Naive thymus-derived CD4-positive, alpha-beta T cell (primary cell): ENCODE measurements at regions of chr10 and their contacts with region 1.

Region 1: GRCh38 chr10:43574001-43574892 is at the start of gene ZNF239:
- DNase-seq: peak; percentile 62 to 82 (median 78)
- ATAC-seq: peak; percentile 91
- H3K4me3 ChIP-seq: peak within 1 kb of the TSS; percentile 72
- H3K4me3 Mint-ChIP-seq: peak within 1 kb of the TSS; percentile 72 to 93 (median 90)
- H3K27ac ChIP-seq: peak within 1 kb of the TSS; percentile 66
- H3K27ac Mint-ChIP-seq: peak within 1 kb of the TSS; percentile 29 to 96 (median 93)
- H3K4me1 ChIP-seq: peaks cover 14 to 19% of the 10 kb centered on the region in 2 donors
- H3K4me1 Mint-ChIP-seq: peaks cover 28 to 64% (median 61%) of the 10 kb centered on the region in 7 donors
- H3K27me3 ChIP-seq: no peaks in the 10 kb centered on the region
- H3K27me3 Mint-ChIP-seq: peaks cover 0 to 3% (median 0%) of the 10 kb centered on the region in 5 donors
- total RNA-seq, gene ZNF239: 1.7 to 8.5 (median 2.3) TPM

Region 2: DNA sequence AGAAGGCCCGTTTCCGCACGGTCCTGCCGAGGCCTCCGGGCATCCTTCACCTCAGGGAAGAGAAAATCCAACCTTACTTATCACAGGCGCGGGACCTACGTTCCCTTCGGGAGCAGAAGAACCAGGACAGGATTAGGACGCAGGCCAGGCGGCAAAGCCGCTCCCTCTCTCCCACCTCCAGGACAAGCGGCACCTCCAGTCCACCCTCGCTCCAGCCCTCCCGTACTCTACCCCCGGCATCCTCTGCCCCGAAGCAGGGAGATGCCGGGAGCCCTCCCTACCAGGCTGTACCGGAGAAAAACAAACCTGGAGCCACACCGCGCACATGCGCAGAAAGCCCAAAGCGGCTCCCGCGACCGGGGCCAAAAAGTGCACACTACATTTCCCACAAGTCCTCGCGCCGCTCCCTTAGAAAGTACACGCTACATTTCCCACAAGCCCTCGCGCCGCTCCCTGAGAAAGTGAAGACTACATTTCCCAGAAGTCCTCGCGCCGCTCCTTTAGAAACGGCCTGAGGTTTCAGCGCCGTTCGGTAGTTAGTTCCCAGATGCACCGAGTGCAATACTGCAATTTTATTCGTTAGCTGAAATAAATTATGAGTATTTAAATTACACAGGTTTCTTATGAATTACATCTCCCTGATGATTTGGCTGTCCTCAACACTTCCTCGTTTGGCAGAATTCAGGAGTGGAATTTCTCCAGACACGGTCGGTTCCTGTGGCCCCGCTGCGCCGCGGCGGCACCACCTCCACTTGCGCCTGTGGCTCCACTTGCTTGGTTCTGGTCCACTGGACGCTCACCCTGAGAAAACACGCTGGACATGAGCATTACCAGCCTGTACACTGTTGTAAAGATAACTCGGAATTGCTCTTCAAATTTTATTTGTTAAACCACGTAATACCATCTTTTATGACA is 1021.5 kb before region 1 on chr10:
- CTCF ChIA-PET with region 1: no interaction called
- POLR2A ChIA-PET with region 1: no interaction called
- intact Hi-C with region 1: loop called in 1 of 2 experiments (anchors 1 kb)
- DNase-seq: peak; percentile 83 to 92 (median 91)
- ATAC-seq: peak; percentile 98
- H3K4me3 ChIP-seq: peak overlapping the region; percentile 95
- H3K4me3 Mint-ChIP-seq: peak overlapping the region; percentile 96 to 100 (median 98)
- H3K27ac ChIP-seq: peak overlapping the region; percentile 87
- H3K27ac Mint-ChIP-seq: peak overlapping the region; percentile 86 to 98 (median 96)
- H3K4me1 ChIP-seq: peaks cover 0 to 16% of the 10 kb centered on the region in 2 donors
- H3K4me1 Mint-ChIP-seq: peaks cover 24 to 49% (median 45%) of the 10 kb centered on the region in 7 donors
- H3K27me3 ChIP-seq: no peaks in the 10 kb centered on the region
- H3K27me3 Mint-ChIP-seq: no peaks in the 10 kb centered on the region

Region 3: DNA sequence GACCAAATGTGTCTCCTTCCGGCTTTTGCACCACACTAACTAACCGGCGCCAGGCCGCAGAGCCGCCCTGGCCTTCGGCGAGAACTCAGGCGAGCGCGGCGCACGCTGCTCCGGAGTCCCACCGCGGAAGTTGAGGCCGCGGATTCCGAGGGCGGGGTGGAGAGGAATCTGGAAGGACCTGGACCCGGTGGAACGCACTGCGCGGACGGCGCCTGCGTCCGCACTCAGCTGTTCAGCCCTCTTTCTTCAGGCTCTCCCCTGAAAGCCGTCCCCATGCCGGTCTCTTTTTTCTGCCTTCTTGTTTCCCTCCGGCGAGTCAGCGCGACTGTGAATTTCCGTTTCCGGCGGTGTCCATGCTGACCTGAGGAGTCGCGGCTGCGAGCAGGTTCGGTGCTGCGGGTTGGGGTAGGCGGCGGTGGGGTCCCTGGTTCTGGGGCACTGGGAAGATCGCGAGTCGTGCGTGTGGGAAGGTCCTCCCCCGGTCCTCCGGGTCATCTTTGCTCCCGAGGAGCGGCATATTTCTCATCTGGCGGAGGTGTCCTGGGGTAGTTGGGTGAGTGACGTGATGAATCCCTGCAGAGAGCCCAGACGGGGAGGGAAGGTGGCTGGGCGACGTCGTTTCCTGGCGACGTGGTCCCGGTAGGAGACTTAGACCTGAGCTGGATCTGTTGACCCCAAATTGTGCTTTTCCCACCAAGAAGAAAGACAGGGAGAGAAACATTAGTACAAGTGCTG is 791.6 kb before region 1 on chr10 and contains the start of gene BMS1:
- CTCF ChIA-PET with region 1: no interaction called
- POLR2A ChIA-PET with region 1: no interaction called
- intact Hi-C with region 1: loop called in 1 of 2 experiments (anchors 1 kb)
- DNase-seq: peak; percentile 78 to 91 (median 86)
- ATAC-seq: peak; percentile 95
- H3K4me3 ChIP-seq: peak within 1 kb of the TSS; percentile 86
- H3K4me3 Mint-ChIP-seq: peak within 1 kb of the TSS; percentile 89 to 100 (median 96)
- H3K27ac ChIP-seq: peak within 1 kb of the TSS; percentile 83
- H3K27ac Mint-ChIP-seq: peak within 1 kb of the TSS; percentile 88 to 98 (median 94)
- H3K4me1 ChIP-seq: peaks cover 0 to 13% of the 10 kb centered on the region in 2 donors
- H3K4me1 Mint-ChIP-seq: peaks cover 10 to 60% (median 45%) of the 10 kb centered on the region in 7 donors
- H3K27me3 ChIP-seq: no peaks in the 10 kb centered on the region
- H3K27me3 Mint-ChIP-seq: peaks cover 0 to 3% (median 0%) of the 10 kb centered on the region in 5 donors
- total RNA-seq, gene BMS1: 9.7 to 20.0 (median 16.9) TPM

Region 4: GRCh38 chr10:43292755-43293676 is 281.2 kb before region 1 on chr10:
- CTCF ChIA-PET with region 1: no interaction called
- POLR2A ChIA-PET with region 1: no interaction called
- intact Hi-C with region 1: loop called in 1 of 2 experiments (anchors 10 kb)
- DNase-seq: peak in 6 of 9 donors; percentile 22 to 51 (median 44)
- ATAC-seq: peak; percentile 72
- H3K4me3 ChIP-seq: no peak overlapping the region
- H3K4me3 Mint-ChIP-seq: peak overlapping the region; percentile 13 to 75 (median 55)
- H3K27ac ChIP-seq: no peak overlapping the region
- H3K27ac Mint-ChIP-seq: peak overlapping the region in 6 of 9 donors; percentile 65 to 84 (median 78)
- H3K4me1 ChIP-seq: peaks cover 31 to 35% of the 10 kb centered on the region in 2 donors
- H3K4me1 Mint-ChIP-seq: peaks cover 16 to 83% (median 34%) of the 10 kb centered on the region in 7 donors
- H3K27me3 ChIP-seq: no peaks in the 10 kb centered on the region
- H3K27me3 Mint-ChIP-seq: peaks cover 0 to 15% (median 6%) of the 10 kb centered on the region in 5 donors

Region 5: DNA sequence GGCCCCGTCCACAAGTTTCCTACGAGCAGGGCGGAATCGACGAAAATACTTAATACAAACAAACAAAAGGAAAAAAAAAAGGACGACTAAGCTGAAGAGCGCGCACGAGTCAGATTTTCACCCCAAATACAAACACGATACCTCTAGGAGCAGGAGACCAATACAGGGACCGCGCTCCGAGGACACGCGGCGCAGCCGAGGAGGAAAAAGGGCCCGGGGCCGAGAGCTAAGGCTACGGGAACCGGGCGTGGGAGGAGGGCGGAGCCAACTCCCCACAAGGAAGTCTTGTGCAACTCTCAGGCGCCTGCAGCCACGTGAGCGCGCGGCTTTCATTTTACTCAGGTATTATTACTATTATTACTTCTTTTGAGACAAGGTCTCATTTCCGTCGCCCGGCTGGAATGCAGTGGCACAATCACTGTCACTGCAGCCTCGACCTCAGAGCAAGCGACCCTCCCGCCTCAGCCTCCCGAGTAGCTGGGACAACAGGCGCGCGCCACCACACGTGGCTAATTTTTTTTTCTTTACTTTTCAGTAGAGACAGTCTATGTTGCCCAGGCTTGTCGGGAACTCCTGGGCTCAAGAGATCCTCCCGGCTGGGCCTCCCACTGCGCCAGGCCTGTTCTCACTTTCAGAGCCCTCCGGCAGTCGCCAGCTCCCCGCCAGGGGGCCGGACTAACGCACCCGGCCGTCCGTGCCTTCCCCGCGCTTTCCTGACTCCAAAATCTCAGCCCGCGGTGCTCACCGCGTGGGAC is 166.5 kb before region 1 on chr10:
- CTCF ChIA-PET with region 1: no interaction called
- POLR2A ChIA-PET with region 1: no interaction called
- intact Hi-C with region 1: loop called in 1 of 2 experiments (anchors 2 kb)
- DNase-seq: peak; percentile 67 to 91 (median 79)
- ATAC-seq: peak; percentile 48
- H3K4me3 ChIP-seq: peak overlapping the region; percentile 99
- H3K4me3 Mint-ChIP-seq: peak overlapping the region; percentile 91 to 100 (median 98)
- H3K27ac ChIP-seq: peak overlapping the region; percentile 100
- H3K27ac Mint-ChIP-seq: peak overlapping the region; percentile 97 to 99 (median 98)
- H3K4me1 ChIP-seq: peaks cover 28 to 37% of the 10 kb centered on the region in 2 donors
- H3K4me1 Mint-ChIP-seq: peaks cover 31 to 50% (median 39%) of the 10 kb centered on the region in 7 donors
- H3K27me3 ChIP-seq: no peaks in the 10 kb centered on the region
- H3K27me3 Mint-ChIP-seq: peaks cover 0 to 2% (median 0%) of the 10 kb centered on the region in 5 donors

Region 6: GRCh38 chr10:43594944-43595589 is 20.8 kb after region 1 on chr10:
- CTCF ChIA-PET with region 1: no interaction called
- POLR2A ChIA-PET with region 1: interaction called, 6 read pairs
- intact Hi-C with region 1: loop called (anchors 2 kb)
- DNase-seq: peak in 7 of 9 donors; percentile 18 to 44 (median 26)
- ATAC-seq: peak; percentile 76
- H3K4me3 ChIP-seq: peak overlapping the region; percentile 60
- H3K4me3 Mint-ChIP-seq: peak overlapping the region; percentile 58 to 92 (median 83)
- H3K27ac ChIP-seq: peak overlapping the region; percentile 26
- H3K27ac Mint-ChIP-seq: peak overlapping the region; percentile 62 to 92 (median 83)
- H3K4me1 ChIP-seq: peaks cover 23 to 24% of the 10 kb centered on the region in 2 donors
- H3K4me1 Mint-ChIP-seq: peaks cover 23 to 41% (median 27%) of the 10 kb centered on the region in 7 donors
- H3K27me3 ChIP-seq: no peaks in the 10 kb centered on the region
- H3K27me3 Mint-ChIP-seq: peaks cover 0 to 8% (median 0%) of the 10 kb centered on the region in 5 donors

Region 7: DNA sequence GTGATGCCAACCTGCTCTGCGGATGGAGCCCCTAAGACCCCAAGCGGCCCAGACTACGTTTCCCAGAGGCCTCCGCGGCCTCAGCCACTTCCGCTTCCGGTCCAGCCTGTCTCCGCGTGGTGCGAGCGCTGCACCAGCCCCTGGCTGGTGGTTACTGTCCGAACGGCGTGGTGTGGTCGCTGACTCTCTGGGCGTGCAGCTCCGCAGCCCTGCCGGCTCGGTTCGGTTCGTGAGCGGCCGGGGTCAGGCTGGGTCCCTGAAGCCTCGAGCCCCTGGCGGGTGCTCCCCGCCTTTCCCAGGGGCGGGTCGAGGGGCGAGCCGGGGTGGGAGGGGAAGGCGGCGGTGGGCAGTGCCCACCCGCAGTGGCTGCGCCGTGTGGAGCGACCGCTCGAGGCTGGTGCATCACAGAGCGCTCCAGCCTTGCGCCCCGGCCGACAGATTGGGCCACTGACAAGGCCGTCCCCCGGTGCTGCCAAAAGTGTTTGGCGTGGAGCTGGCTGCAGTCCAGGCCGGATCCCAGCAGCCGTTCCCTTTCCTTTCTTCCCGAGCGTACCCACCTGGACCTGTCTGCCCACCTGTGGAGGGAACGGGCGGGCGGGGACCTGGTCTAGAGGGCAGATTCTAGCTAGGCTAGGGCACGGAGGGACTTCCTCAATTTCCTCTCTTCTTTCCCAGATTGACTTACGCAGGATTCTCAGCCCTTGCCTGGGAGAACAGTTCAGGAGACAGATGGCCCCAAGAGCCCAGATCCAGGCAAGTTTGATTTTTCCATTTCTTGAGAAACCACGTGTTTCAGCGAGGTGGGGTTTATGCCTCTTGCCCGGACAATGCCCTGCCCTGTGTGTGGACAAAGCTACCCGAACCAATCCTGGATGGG is 32.3 kb after region 1 on chr10 and contains the start of gene ZNF485:
- CTCF ChIA-PET with region 1: no interaction called
- POLR2A ChIA-PET with region 1: interaction called, 22 read pairs
- intact Hi-C with region 1: loop called (anchors 1 kb)
- DNase-seq: peak; percentile 41 to 61 (median 56)
- ATAC-seq: peak; percentile 90
- H3K4me3 ChIP-seq: peak within 1 kb of the TSS; percentile 82
- H3K4me3 Mint-ChIP-seq: peak within 1 kb of the TSS; percentile 80 to 93 (median 85)
- H3K27ac ChIP-seq: peak within 1 kb of the TSS; percentile 75
- H3K27ac Mint-ChIP-seq: peak within 1 kb of the TSS; percentile 62 to 88 (median 77)
- H3K4me1 ChIP-seq: peaks cover 11 to 12% of the 10 kb centered on the region in 2 donors
- H3K4me1 Mint-ChIP-seq: peaks cover 11 to 47% (median 45%) of the 10 kb centered on the region in 7 donors
- H3K27me3 ChIP-seq: no peaks in the 10 kb centered on the region
- H3K27me3 Mint-ChIP-seq: peaks cover 0 to 8% (median 0%) of the 10 kb centered on the region in 5 donors
- total RNA-seq, gene ZNF485: 2.9 to 13.1 (median 5.3) TPM

Region 8: DNA sequence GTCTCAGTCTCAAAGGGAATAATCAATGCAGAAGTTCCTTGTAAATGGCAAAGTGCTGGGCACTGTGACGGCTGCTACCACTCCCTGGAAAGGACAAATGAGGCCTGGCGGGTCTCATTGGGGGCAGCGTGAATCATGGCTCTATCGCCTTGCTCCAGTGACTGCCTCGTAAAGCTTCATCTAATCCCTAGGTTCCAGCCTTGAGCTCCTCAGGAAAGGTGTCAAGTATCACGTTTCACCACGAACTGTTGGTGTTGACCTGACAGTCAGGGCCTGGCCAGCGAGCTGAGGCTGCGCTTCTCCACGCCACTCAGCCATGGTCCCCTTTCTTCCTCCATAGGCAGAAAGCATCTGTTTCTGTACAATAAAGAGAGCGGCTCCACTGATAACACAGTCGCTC is 201.1 kb after region 1 on chr10:
- CTCF ChIA-PET with region 1: no interaction called
- POLR2A ChIA-PET with region 1: no interaction called
- intact Hi-C with region 1: no loop called
- DNase-seq: no peak
- ATAC-seq: no peak
- H3K4me3 ChIP-seq: no peak overlapping the region
- H3K4me3 Mint-ChIP-seq: no peak overlapping the region
- H3K27ac ChIP-seq: no peak overlapping the region
- H3K27ac Mint-ChIP-seq: no peak overlapping the region
- H3K4me1 ChIP-seq: peaks cover 6 to 7% of the 10 kb centered on the region in 2 donors
- H3K4me1 Mint-ChIP-seq: peaks cover 8 to 18% (median 13%) of the 10 kb centered on the region in 7 donors
- H3K27me3 ChIP-seq: no peaks in the 10 kb centered on the region
- H3K27me3 Mint-ChIP-seq: peaks cover 0 to 12% (median 0%) of the 10 kb centered on the region in 5 donors